ENCODE measurements at regions of chr10 and their contacts with region 1.

Region 1: DNA sequence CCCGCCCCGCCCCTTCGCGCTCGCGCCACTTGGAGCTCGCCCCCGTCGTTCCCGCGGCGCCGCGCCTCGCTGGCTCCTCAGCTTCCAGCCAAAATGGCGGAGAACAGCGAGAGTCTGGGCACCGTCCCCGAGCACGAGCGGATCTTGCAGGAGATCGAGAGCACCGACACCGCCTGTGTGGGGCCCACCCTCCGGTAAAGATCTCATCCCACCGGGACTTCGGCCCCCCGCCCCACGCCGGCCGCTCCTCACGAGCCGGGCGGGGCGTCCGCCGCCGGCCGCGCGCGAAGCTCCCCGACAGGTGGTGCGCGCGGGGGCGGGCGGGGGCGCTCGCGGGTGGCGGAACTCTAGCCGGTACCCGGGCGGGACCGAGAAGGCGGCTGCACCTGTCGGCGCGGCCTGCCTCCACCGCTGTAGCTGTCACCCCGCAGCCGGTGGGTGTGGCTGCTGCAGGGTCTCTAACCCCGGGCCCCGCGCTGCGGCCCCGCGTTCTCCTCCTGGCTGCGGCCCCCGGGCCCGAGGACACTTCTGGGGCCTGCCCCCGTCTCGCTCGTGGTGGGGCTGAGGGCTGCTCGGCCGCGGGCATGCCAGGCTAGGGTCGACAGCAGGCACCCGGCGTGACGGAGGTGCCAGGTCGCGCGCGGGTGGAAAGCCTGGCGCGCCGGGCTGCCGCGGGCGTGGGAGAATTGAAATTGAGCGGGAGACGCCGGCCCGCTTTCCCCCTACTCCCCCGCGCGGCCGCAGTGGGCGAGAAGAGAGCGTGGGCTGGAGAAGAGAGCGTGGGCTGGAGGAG is at the start of gene EXOC6:
- DNase-seq: peak; percentile 88 to 93 (median 91)
- H3K4me3 ChIP-seq: peak within 1 kb of the TSS; percentile 60 to 76
- H3K4me3 Mint-ChIP-seq: peak within 1 kb of the TSS; percentile 85 to 96 (median 93)
- H3K27ac ChIP-seq: peak within 1 kb of the TSS; percentile 67
- H3K27ac Mint-ChIP-seq: peak within 1 kb of the TSS; percentile 86 to 95 (median 93)
- H3K4me1 ChIP-seq: peaks cover 19% of the 10 kb centered on the region
- H3K4me1 Mint-ChIP-seq: peaks cover 10 to 38% (median 24%) of the 10 kb centered on the region in 4 donors
- H3K27me3 ChIP-seq: no peaks in the 10 kb centered on the region
- H3K27me3 Mint-ChIP-seq: no peaks in the 10 kb centered on the region
- total RNA-seq, gene EXOC6: 10.5 to 11.4 TPM

Region 2: GRCh38 chr10:91409869-91410637 is 1438.6 kb before region 1 on chr10 and contains the start of gene HECTD2:
- CTCF ChIA-PET with region 1: no interaction called
- POLR2A ChIA-PET with region 1: no interaction called
- intact Hi-C with region 1: loop called (anchors 5 kb)
- DNase-seq: peak; percentile 78 to 90 (median 88)
- H3K4me3 ChIP-seq: peak within 1 kb of the TSS; percentile 88 to 92
- H3K4me3 Mint-ChIP-seq: peak within 1 kb of the TSS; percentile 88 to 97 (median 91)
- H3K27ac ChIP-seq: peak within 1 kb of the TSS; percentile 74
- H3K27ac Mint-ChIP-seq: peak within 1 kb of the TSS; percentile 78 to 97 (median 95)
- H3K4me1 ChIP-seq: peaks cover 20% of the 10 kb centered on the region
- H3K4me1 Mint-ChIP-seq: peaks cover 7 to 15% (median 11%) of the 10 kb centered on the region in 4 donors
- H3K27me3 ChIP-seq: no peaks in the 10 kb centered on the region
- H3K27me3 Mint-ChIP-seq: peaks cover 0 to under 1% of the 10 kb centered on the region in 2 donors
- total RNA-seq, gene HECTD2: 2.6 to 2.7 TPM

Region 3: DNA sequence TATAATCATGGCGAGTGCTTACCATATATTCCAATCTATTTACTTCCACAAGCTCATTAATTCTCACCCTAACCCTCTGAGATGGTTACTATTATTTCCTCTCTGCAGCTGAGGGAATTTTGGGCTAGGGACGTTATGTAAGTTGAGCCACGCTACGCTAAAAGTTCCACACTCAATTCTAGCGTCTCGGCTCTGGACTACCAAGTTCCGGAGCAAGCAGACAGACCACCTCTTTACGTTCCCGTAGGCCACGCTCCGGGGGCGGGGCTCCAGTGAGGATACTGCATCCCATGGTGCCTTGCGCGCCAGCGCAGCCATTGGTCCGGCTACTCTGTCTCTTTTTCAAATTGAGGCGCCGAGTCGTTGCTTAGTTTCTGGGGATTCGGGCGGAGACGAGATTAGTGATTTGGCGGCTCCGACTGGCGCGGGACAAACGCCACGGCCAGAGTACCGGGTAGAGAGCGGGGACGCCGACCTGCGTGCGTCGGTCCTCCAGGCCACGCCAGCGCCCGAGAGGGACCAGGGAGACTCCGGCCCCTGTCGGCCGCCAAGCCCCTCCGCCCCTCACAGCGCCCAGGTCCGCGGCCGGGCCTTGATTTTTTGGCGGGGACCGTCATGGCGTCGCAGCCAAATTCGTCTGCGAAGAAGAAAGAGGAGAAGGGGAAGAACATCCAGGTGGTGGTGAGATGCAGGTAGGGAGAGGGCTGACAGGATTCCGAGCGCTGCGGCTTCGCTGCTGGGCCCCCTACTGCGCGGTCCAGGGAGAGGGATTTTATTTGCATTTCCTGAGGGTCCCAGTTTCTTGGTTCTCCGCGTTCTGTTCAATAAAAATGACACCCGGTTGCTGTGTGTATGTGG is 255.6 kb before region 1 on chr10 and contains the start of gene KIF11:
- CTCF ChIA-PET with region 1: interaction called, 5 read pairs
- POLR2A ChIA-PET with region 1: interaction called, 16 read pairs
- intact Hi-C with region 1: loop called (anchors 1 kb)
- DNase-seq: peak; percentile 93 to 97 (median 93)
- H3K4me3 ChIP-seq: peak within 1 kb of the TSS; percentile 65 to 76
- H3K4me3 Mint-ChIP-seq: peak within 1 kb of the TSS; percentile 93 to 99 (median 98)
- H3K27ac ChIP-seq: peak within 1 kb of the TSS; percentile 85
- H3K27ac Mint-ChIP-seq: peak within 1 kb of the TSS; percentile 99 to 100 (median 100)
- H3K4me1 ChIP-seq: peaks cover 49% of the 10 kb centered on the region
- H3K4me1 Mint-ChIP-seq: peaks cover 27 to 63% (median 36%) of the 10 kb centered on the region in 4 donors
- H3K27me3 ChIP-seq: no peaks in the 10 kb centered on the region
- H3K27me3 Mint-ChIP-seq: no peaks in the 10 kb centered on the region
- total RNA-seq, gene KIF11: 2.0 to 2.1 TPM

Region 4: GRCh38 chr10:92867235-92867634 is 18.6 kb after region 1 on chr10:
- CTCF ChIA-PET with region 1: interaction called, 20 read pairs
- POLR2A ChIA-PET with region 1: no interaction called
- intact Hi-C with region 1: no loop called
- DNase-seq: no peak
- H3K4me3 ChIP-seq: no peak overlapping the region
- H3K4me3 Mint-ChIP-seq: no peak overlapping the region
- H3K27ac ChIP-seq: no peak overlapping the region
- H3K27ac Mint-ChIP-seq: peak overlapping the region in 3 of 7 donors; percentile 8 to 64 (median 10)
- H3K4me1 ChIP-seq: peaks cover 3% of the 10 kb centered on the region
- H3K4me1 Mint-ChIP-seq: peaks cover 7 to 18% (median 13%) of the 10 kb centered on the region in 4 donors
- H3K27me3 ChIP-seq: no peaks in the 10 kb centered on the region
- H3K27me3 Mint-ChIP-seq: no peaks in the 10 kb centered on the region

Region 5: DNA sequence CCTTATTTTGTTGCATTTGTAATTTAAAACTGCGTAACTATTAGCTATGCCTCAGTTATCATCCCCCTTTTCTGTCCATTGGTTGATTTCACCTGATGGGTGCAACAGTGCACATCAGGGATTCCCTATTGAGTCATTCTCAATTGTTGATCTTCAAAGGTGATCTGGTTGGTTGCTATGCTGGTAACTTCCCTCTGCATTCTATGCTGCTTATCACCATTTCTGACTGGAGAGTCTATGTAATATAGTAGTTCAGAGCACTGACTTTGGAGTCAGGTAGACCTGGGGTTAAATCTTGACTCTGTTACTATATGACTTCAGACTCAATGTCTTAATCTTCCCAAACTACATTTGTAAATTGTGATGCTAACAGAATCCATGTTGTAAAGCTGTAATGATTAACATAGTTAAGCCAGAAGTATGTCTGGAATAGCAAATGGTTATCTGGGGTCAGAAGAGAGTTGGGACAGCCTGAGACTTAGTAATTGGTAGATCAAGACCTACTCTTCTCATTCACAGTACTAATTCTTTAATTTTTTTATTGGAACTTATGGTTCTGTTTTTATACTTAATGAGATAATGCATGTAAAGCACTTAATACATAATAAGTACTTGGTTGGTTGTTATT is 37.8 kb after region 1 on chr10:
- CTCF ChIA-PET with region 1: interaction called, 47 read pairs
- POLR2A ChIA-PET with region 1: interaction called, 3 read pairs
- intact Hi-C with region 1: no loop called
- DNase-seq: no peak
- H3K4me3 ChIP-seq: no peak overlapping the region
- H3K4me3 Mint-ChIP-seq: no peak overlapping the region
- H3K27ac ChIP-seq: no peak overlapping the region
- H3K27ac Mint-ChIP-seq: peak overlapping the region in 1 of 7 donors; percentile 81
- H3K4me1 ChIP-seq: no peaks in the 10 kb centered on the region
- H3K4me1 Mint-ChIP-seq: peaks cover 0 to 9% (median 7%) of the 10 kb centered on the region in 4 donors
- H3K27me3 ChIP-seq: no peaks in the 10 kb centered on the region
- H3K27me3 Mint-ChIP-seq: no peaks in the 10 kb centered on the region

Region 6: GRCh38 chr10:93702211-93703001 is 853.8 kb after region 1 on chr10 and contains the start of gene FRA10AC1:
- CTCF ChIA-PET with region 1: no interaction called
- POLR2A ChIA-PET with region 1: interaction called, 6 read pairs
- intact Hi-C with region 1: loop called (anchors 5 kb)
- DNase-seq: peak; percentile 83 to 89 (median 84)
- H3K4me3 ChIP-seq: peak within 1 kb of the TSS; percentile 78 to 100
- H3K4me3 Mint-ChIP-seq: no peak within 1 kb of the TSS
- H3K27ac ChIP-seq: peak within 1 kb of the TSS; percentile 63
- H3K27ac Mint-ChIP-seq: no peak within 1 kb of the TSS
- H3K4me1 ChIP-seq: peaks cover 28% of the 10 kb centered on the region
- H3K4me1 Mint-ChIP-seq: peaks cover 6 to 23% (median 16%) of the 10 kb centered on the region in 4 donors
- H3K27me3 ChIP-seq: no peaks in the 10 kb centered on the region
- H3K27me3 Mint-ChIP-seq: no peaks in the 10 kb centered on the region
- total RNA-seq, gene FRA10AC1: 21.6 to 32.5 TPM

Region 7: DNA sequence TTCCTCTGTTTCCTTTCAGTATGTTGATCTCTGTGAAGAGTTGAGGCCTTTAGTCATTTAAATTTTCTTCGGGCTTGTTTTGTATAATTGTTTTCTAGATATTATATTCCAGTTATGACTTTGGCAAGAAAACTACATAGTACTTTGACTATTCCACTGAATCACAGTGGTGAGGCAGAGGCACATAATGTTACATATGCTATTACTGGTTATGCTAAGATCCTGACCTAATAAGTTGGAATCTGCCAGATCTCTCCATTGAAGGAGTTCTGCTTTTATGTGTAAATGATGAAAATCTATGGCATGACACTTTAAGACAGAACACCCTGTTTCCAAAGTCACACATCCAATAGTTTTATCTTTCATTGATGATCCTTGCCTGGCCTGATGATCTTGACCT is 1997.6 kb after region 1 on chr10:
- CTCF ChIA-PET with region 1: no interaction called
- POLR2A ChIA-PET with region 1: no interaction called
- intact Hi-C with region 1: no loop called
- DNase-seq: no peak
- H3K4me3 ChIP-seq: no peak overlapping the region
- H3K4me3 Mint-ChIP-seq: no peak overlapping the region
- H3K27ac ChIP-seq: no peak overlapping the region
- H3K27ac Mint-ChIP-seq: no peak overlapping the region
- H3K4me1 ChIP-seq: no peaks in the 10 kb centered on the region
- H3K4me1 Mint-ChIP-seq: no peaks in the 10 kb centered on the region
- H3K27me3 ChIP-seq: no peaks in the 10 kb centered on the region
- H3K27me3 Mint-ChIP-seq: no peaks in the 10 kb centered on the region

Measured in CD4-positive, alpha-beta memory T cell (primary cell).